Heart right ventricle (tissue), 16 donors: ENCODE measurements at regions of chr1 and their contacts with region 1.

Region 1: DNA sequence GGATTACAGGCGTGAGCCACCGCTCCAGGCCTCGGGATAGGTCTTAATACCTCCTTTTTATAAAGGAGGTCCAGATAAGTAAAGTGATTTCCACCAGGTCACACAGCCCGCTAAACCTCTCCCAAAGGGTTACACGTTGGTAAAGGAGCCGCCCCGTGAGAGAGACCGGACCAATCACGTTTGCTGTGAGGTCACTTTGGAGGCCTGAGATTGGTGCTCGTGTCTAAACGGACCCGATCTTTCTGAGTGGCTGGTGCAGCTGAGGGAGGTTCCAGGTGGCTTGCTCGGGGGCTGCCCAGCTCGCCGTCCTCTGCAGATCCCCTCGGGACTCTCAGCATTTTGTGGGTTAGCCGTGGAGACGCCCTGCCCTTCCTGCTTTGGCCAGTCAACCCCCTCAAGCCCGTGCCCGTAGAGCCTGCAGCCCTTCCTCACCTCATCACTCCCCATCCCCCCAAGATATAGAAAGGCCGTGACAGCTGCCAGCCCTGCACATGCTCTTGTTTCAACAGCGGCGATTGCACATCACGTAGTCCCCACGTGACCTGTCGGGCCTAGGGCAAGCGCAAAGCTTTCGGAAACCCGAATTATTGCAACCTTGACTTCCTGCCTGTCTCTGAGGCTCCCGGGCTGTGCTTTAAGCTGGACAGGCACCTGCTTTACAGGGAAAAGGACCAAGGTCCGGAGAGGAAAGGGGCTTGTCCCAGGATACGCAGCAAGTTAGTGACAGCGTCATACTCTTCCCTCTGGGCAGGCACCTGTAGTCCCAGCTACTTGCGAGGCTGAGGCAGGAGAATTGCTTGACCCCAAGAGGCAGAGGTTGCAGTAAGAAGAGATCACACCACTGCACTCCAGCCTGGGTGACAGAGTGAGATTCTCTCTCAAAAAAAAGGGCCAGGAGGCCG is 5.0 kb upstream of the COA7 start:
- DNase-seq: peak; percentile 81 to 92
- ATAC-seq: peak; percentile 88 to 94 (median 91)
- H3K4me3 ChIP-seq: peak overlapping the region; percentile 19 to 70 (median 60)
- H3K27ac ChIP-seq: peak overlapping the region; percentile 70 to 90 (median 84)
- H3K4me1 ChIP-seq: peaks cover 0 to 41% (median 12%) of the 10 kb centered on the region in 9 donors
- H3K27me3 ChIP-seq: no peaks in the 10 kb centered on the region
- CTCF ChIP-seq: no peak

Region 2: DNA sequence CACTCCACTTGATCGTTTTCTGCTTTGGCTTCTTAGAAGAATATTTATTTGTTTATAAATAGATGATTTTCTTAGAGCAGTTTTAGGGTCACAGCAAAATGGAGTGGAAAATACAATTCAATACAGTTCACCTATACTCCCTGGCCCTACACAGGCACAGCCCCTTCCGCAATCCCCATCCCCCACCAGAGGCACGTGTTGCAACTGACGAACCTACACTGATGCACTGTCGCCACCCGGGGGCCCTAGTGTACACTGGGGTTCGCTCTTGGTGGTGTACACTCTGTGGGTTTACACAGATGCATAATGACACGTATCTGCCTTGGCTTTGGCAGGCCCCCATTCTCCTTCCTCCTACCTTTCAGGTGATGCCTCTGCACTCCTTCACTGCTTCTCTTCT is 210.4 kb after region 1 on chr1:
- intact Hi-C with region 1: loop called in 1 of 10 experiments (anchors 10 kb)
- DNase-seq: no peak
- ATAC-seq: no peak
- H3K4me3 ChIP-seq: no peak overlapping the region
- H3K27ac ChIP-seq: no peak overlapping the region
- H3K4me1 ChIP-seq: peaks cover 0 to 35% (median 12%) of the 10 kb centered on the region in 9 donors
- H3K27me3 ChIP-seq: no peaks in the 10 kb centered on the region
- CTCF ChIP-seq: no peak

Region 3: GRCh38 chr1:52927212-52928014 is 224.3 kb after region 1 on chr1 and contains the start of gene SCP2:
- intact Hi-C with region 1: loop called in 2 of 10 experiments (anchors 5 to 10 kb)
- DNase-seq: peak; percentile 86 to 90
- ATAC-seq: peak; percentile 94 to 97 (median 96)
- H3K4me3 ChIP-seq: peak within 1 kb of the TSS; percentile 55 to 85 (median 78)
- H3K27ac ChIP-seq: peak within 1 kb of the TSS; percentile 76 to 90 (median 87)
- H3K4me1 ChIP-seq: peaks cover 5 to 30% (median 23%) of the 10 kb centered on the region in 9 donors
- H3K27me3 ChIP-seq: peaks cover 0 to 2% (median 0%) of the 10 kb centered on the region in 7 donors
- CTCF ChIP-seq: no peak
- total RNA-seq, gene SCP2: 117 to 149 (median 133) TPM

Region 4: GRCh38 chr1:53196485-53197270 is 493.5 kb after region 1 on chr1 and contains the start of gene CPT2:
- intact Hi-C with region 1: loop called in 3 of 10 experiments (anchors 10 kb)
- DNase-seq: peak; percentile 93 to 96
- ATAC-seq: peak; percentile 97 to 99 (median 98)
- H3K4me3 ChIP-seq: peak within 1 kb of the TSS; percentile 64 to 95 (median 88)
- H3K27ac ChIP-seq: peak within 1 kb of the TSS; percentile 86 to 99 (median 98)
- H3K4me1 ChIP-seq: peaks cover 3 to 41% (median 34%) of the 10 kb centered on the region in 9 donors
- H3K27me3 ChIP-seq: no peaks in the 10 kb centered on the region
- CTCF ChIP-seq: peak in 3 of 9 donors; percentile 16 to 35 (median 27)
- total RNA-seq, gene CPT2: 29.3 to 48.7 (median 37.5) TPM